ENCODE measurements at regions of chr11 and their contacts with region 1.

Region 1: DNA sequence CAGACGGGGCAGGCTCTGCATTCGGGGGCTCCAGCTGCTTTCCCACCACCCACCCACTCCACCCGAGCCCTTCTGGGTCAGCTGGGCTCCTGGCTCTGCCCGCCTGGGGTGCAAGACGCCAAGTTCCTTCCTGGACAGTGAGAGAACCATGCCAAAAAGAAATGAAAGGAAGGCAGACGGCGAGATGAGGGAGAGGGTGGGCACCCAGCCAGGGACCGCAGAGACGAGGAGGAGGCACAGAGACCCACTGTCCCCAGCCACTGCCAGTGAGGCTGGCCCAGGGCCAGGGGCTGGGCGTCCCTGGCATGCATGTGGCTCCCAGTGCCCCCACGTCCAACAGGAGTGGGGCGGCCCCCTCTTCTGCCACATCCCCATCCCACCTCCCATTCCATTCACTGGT is 10.8 kb upstream of the CD81 start:
- DNase-seq: no peak
- H3K4me3 ChIP-seq: no peak overlapping the region
- H3K27ac ChIP-seq: no peak overlapping the region
- H3K4me1 ChIP-seq: no peaks in the 10 kb centered on the region
- H3K27me3 ChIP-seq: no peaks in the 10 kb centered on the region
- CTCF ChIP-seq: no peak
- POLR2A ChIP-seq: no peak

Region 2: DNA sequence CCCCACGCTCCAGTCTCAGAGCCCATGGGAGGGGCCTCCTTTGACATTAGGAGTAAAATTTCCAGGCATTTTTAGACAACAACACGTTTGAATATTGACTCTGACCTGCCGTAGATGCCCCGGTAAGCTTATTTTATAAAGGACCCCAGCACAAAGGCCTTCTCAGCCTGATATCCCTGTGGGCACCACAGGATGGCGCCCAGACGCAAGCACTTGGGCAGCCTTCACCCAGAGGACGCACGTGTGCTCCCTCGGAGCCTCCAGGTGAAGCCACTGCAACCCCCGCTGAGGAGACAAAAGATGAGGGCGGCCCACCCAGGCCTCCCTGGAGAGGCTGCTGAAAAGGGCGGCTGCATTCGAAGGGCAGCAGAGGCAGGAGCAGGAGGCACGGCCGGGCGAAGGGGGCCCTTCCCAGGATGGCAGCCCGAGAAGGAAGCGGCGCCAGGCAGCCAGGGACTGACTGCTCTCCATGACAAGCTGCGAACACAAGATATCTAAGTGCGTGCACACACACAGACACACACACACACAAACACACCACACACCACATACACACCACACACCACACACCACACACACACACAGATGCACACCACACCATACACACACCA is 179.5 kb before region 1 on chr11:
- intact Hi-C with region 1: no loop called
- DNase-seq: peak in 2 of 7 donors; percentile 26 to 81
- H3K4me3 ChIP-seq: no peak overlapping the region
- H3K27ac ChIP-seq: peak overlapping the region in 1 of 5 donors; percentile 30
- H3K4me1 ChIP-seq: peaks cover 0 to 4% of the 10 kb centered on the region in 2 donors
- H3K27me3 ChIP-seq: peaks cover 4% of the 10 kb centered on the region
- CTCF ChIP-seq: peak; percentile 18 to 61 (median 40)
- POLR2A ChIP-seq: no peak

Region 3: GRCh38 chr11:2314525-2315394 is 51.5 kb before region 1 on chr11:
- intact Hi-C with region 1: loop called in 1 of 2 experiments (anchors 5 kb)
- DNase-seq: peak; percentile 65 to 85 (median 82)
- H3K4me3 ChIP-seq: no peak overlapping the region
- H3K27ac ChIP-seq: peak overlapping the region in 2 of 5 donors; percentile 47 to 74
- H3K4me1 ChIP-seq: peaks cover 9 to 14% of the 10 kb centered on the region in 2 donors
- H3K27me3 ChIP-seq: no peaks in the 10 kb centered on the region
- CTCF ChIP-seq: no peak
- POLR2A ChIP-seq: no peak

Region 4: GRCh38 chr11:2428322-2428795 is 62.1 kb after region 1 on chr11:
- intact Hi-C with region 1: no loop called
- DNase-seq: peak; percentile 80 to 93 (median 87)
- H3K4me3 ChIP-seq: no peak overlapping the region
- H3K27ac ChIP-seq: no peak overlapping the region
- H3K4me1 ChIP-seq: no peaks in the 10 kb centered on the region
- H3K27me3 ChIP-seq: no peaks in the 10 kb centered on the region
- CTCF ChIP-seq: peak; percentile 83 to 99 (median 96)
- POLR2A ChIP-seq: no peak

Region 5: GRCh38 chr11:2466869-2467698 is 100.8 kb after region 1 on chr11:
- intact Hi-C with region 1: no loop called
- DNase-seq: peak in 6 of 7 donors; percentile 9 to 50 (median 18)
- H3K4me3 ChIP-seq: no peak overlapping the region
- H3K27ac ChIP-seq: peak overlapping the region; percentile 13 to 99 (median 90)
- H3K4me1 ChIP-seq: peaks cover 47 to 52% of the 10 kb centered on the region in 2 donors
- H3K27me3 ChIP-seq: no peaks in the 10 kb centered on the region
- CTCF ChIP-seq: no peak
- POLR2A ChIP-seq: no peak

Region 6: DNA sequence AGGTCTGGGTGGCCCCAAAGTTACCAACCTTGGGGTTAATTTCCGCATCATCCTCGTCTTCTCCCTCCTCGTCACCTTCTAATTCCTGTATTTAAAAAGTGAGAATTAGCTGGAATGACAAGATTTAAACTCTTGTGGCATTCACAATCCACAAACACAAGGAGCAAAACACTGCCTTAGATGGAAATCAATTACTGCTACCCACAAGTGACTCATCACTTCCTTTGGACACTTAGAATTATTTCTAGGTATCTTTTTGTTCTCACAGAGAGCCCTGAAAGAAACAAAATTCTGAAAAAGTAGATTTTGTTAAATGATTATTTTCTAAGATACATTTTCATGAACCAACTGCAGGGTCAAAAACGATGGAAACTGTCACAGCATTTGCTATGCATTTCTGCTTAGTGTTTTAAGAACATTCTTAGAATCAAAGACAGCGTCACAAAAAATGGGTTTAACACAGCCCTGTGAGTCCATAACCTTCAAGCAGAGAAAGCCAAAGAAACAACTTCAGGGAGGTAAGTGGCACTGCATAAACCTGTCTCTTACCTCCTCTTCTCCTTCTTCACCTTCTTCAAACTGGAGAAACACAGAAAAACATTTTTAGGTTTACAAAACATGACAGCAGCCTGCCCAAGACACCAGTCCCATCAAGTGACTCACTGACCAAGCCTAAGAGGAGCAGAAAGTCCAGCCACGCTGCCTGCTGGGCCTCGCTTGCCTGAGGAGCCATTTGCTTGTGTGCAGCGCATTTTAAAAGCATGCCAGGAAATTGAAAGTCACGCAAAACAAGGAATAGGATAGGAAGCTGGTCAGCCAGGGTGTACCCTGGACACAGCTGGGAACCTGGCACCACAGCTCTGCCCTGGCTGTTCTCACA is 585.2 kb after region 1 on chr11:
- intact Hi-C with region 1: no loop called
- DNase-seq: no peak
- H3K4me3 ChIP-seq: no peak overlapping the region
- H3K27ac ChIP-seq: no peak overlapping the region
- H3K4me1 ChIP-seq: no peaks in the 10 kb centered on the region
- H3K27me3 ChIP-seq: no peaks in the 10 kb centered on the region
- CTCF ChIP-seq: no peak
- POLR2A ChIP-seq: no peak